Lower leg skin (tissue), 4 donors: ENCODE measurements at regions of chr16 and their contacts with region 1.

Region 1: GRCh38 chr16:88014252-88014781 is 63.1 kb downstream of the BANP start:
- DNase-seq: peak in 1 of 2 donors; percentile 78
- H3K4me3 ChIP-seq: no peak overlapping the region
- CTCF ChIP-seq: no peak
- POLR2A ChIP-seq: no peak

Region 2: GRCh38 chr16:87956365-87957231 is 57.7 kb before region 1 on chr16:
- intact Hi-C with region 1: loop called (anchors 1 kb)
- DNase-seq: no peak
- H3K4me3 ChIP-seq: no peak overlapping the region
- CTCF ChIP-seq: no peak
- POLR2A ChIP-seq: no peak